ENCODE measurements at regions of chr11 and their contacts with region 1.

Region 1: GRCh38 chr11:44388828-44389657 is 79.1 kb upstream of the ALX4 start:
- DNase-seq: no peak
- ATAC-seq: no peak
- H3K4me3 ChIP-seq: no peak overlapping the region
- H3K27ac ChIP-seq: no peak overlapping the region
- H3K4me1 ChIP-seq: no peaks in the 10 kb centered on the region
- H3K27me3 ChIP-seq: peaks cover 2% of the 10 kb centered on the region; the same call in 1 of the 2 replicates
- CTCF ChIP-seq: no peak
- POLR2A ChIP-seq: no peak
- RAD21 ChIP-seq: no peak

Region 2: GRCh38 chr11:44335919-44336318 is 53.1 kb before region 1 on chr11:
- CTCF ChIA-PET with region 1: no interaction called
- POLR2A ChIA-PET with region 1: no interaction called
- RAD21 ChIA-PET with region 1: no interaction called
- intact Hi-C with region 1: loop called (anchors 2 kb)
- DNase-seq: no peak
- ATAC-seq: no peak
- H3K4me3 ChIP-seq: no peak overlapping the region
- H3K27ac ChIP-seq: no peak overlapping the region
- H3K4me1 ChIP-seq: peaks cover 0 to 8% of the 10 kb centered on the region in 2 experiments; a peak in 2 of 4 replicates
- H3K27me3 ChIP-seq: peaks cover 40% of the 10 kb centered on the region
- CTCF ChIP-seq: no peak
- POLR2A ChIP-seq: no peak
- RAD21 ChIP-seq: no peak

Region 3: DNA sequence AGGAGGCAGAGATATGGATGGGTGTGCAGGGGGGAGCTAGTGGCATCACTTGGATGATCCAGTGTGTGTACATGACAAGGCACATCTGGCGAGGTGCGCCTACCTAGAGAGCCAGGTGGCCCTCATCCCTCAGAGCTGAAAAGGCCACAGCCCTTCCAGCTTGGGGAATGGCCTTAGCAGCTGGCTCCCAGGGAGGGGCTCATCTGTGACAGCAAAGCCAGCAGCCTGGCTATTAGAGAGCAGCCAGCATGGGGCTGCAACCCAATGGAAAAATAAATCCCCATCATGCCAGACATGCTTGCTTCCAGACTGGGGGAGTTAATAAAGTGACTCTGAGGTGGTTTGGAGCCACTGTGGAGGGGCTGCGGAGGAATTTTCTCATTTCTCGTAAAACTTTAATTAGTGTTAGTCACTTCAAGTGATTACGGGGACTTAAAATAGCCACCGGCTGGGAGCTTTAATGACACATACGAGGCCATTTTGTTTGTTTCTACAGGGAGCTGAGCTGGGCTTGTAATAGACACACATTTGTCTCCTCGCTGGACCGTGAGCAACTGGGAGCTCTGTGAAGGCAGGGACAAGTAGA is 32.1 kb after region 1 on chr11:
- CTCF ChIA-PET with region 1: no interaction called
- POLR2A ChIA-PET with region 1: no interaction called
- RAD21 ChIA-PET with region 1: no interaction called
- intact Hi-C with region 1: no loop called
- DNase-seq: no peak
- ATAC-seq: no peak
- H3K4me3 ChIP-seq: no peak overlapping the region
- H3K27ac ChIP-seq: no peak overlapping the region
- H3K4me1 ChIP-seq: no peaks in the 10 kb centered on the region
- H3K27me3 ChIP-seq: peaks cover 32% of the 10 kb centered on the region; the same call in 1 of the 2 replicates
- CTCF ChIP-seq: no peak
- POLR2A ChIP-seq: no peak
- RAD21 ChIP-seq: no peak

Region 4: GRCh38 chr11:44596525-44597276 is 207.7 kb after region 1 on chr11:
- CTCF ChIA-PET with region 1: no interaction called
- POLR2A ChIA-PET with region 1: no interaction called
- RAD21 ChIA-PET with region 1: no interaction called
- intact Hi-C with region 1: no loop called
- DNase-seq: no peak
- ATAC-seq: no peak
- H3K4me3 ChIP-seq: no peak overlapping the region
- H3K27ac ChIP-seq: no peak overlapping the region
- H3K4me1 ChIP-seq: no peaks in the 10 kb centered on the region; a peak in 1 of 4 replicates
- H3K27me3 ChIP-seq: no peaks in the 10 kb centered on the region
- CTCF ChIP-seq: no peak
- POLR2A ChIP-seq: no peak
- RAD21 ChIP-seq: no peak

Region 5: DNA sequence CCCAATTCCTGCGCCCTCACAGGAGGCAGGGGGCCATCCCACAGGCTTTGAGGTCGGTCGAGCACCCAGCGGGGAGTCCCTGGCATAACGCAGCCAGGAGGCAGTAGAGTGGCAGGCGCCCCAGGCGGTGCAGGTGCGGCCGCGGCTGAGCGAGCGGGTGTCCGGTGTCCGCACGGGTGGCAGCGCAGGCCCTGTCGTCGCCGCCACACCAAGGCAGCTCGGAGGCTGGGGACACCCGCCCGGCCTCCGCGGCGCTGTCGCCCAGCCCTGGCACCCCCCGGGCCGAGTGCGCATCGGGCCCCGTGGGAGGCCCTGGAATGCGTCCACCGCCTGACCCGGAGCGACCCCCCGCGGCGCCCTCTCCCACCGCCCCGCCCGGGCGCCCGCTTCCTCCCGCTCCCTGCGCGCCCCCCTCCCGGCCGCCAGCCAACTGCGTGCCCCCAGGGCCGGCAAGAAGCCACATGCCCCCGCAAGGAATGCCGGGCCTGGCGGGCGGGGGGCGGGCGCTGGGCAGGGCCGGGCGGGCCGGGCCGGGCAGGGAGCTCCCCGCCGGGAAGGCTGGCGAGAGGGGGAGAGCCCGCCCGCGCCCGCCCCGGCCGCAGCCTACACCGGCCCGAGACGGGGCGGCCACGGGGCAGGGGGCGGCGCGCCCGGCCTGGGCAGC is 791.3 kb after region 1 on chr11:
- CTCF ChIA-PET with region 1: no interaction called
- POLR2A ChIA-PET with region 1: no interaction called
- RAD21 ChIA-PET with region 1: no interaction called
- intact Hi-C with region 1: no loop called
- DNase-seq: peak; percentile 16
- ATAC-seq: peak; percentile 84
- H3K4me3 ChIP-seq: peak overlapping the region; percentile 44 to 56
- H3K27ac ChIP-seq: peak overlapping the region; percentile 82
- H3K4me1 ChIP-seq: peaks cover 27 to 28% of the 10 kb centered on the region in 2 experiments
- H3K27me3 ChIP-seq: no peaks in the 10 kb centered on the region
- CTCF ChIP-seq: peak in 2 of 3 experiments; percentile 54 to 67; a peak in 4 of 6 replicates
- POLR2A ChIP-seq: no peak
- RAD21 ChIP-seq: no peak